ENCODE measurements at regions of chr10 and their contacts with region 1.

Region 1: GRCh38 chr10:60883187-60883586 is 60.8 kb downstream of the RHOBTB1 start:
- DNase-seq: peak; percentile 19
- H3K4me3 ChIP-seq: no peak overlapping the region
- H3K27ac ChIP-seq: no peak overlapping the region
- H3K4me1 ChIP-seq: no peaks in the 10 kb centered on the region
- H3K27me3 ChIP-seq: no peaks in the 10 kb centered on the region
- CTCF ChIP-seq: peak; percentile 56 to 68

Region 2: GRCh38 chr10:60801522-60801921 is 81.7 kb before region 1 on chr10:
- CTCF ChIA-PET with region 1: no interaction called
- dilution Hi-C with region 1: no loop called
- in situ Hi-C with region 1: no loop called
- intact Hi-C with region 1: no loop called
- DNase-seq: no peak
- H3K4me3 ChIP-seq: no peak overlapping the region
- H3K27ac ChIP-seq: no peak overlapping the region
- H3K4me1 ChIP-seq: no peaks in the 10 kb centered on the region
- H3K27me3 ChIP-seq: no peaks in the 10 kb centered on the region
- CTCF ChIP-seq: no peak

Region 3: DNA sequence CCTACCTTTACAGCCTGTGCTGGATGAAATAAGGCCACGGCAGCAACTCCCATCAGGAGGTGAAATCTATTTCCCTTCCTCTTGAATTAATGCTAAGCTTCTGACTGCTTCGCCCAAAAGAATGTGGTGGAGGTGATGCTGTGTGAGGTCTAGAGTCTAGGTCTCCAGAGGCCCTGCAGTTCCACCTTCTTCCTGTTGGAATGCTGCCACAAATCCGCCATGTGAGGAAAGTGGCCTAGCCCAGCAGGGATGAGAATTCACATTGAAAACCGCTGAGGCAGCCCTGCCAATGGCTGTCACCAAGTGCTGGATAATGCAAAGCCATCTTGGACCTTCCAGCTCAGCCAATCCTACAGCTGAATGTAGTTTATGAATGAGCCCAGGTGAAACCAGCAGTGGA is 32.8 kb after region 1 on chr10:
- CTCF ChIA-PET with region 1: no interaction called
- dilution Hi-C with region 1: no loop called
- in situ Hi-C with region 1: no loop called
- intact Hi-C with region 1: no loop called
- DNase-seq: no peak
- H3K4me3 ChIP-seq: no peak overlapping the region
- H3K27ac ChIP-seq: no peak overlapping the region
- H3K4me1 ChIP-seq: peaks cover 4% of the 10 kb centered on the region
- H3K27me3 ChIP-seq: no peaks in the 10 kb centered on the region
- CTCF ChIP-seq: peak in 1 of 2 donors; percentile 25

Region 4: GRCh38 chr10:60943316-60944158 is 60.4 kb after region 1 on chr10:
- CTCF ChIA-PET with region 1: no interaction called
- dilution Hi-C with region 1: no loop called
- in situ Hi-C with region 1: no loop called
- intact Hi-C with region 1: loop called (anchors 1 kb)
- DNase-seq: peak; percentile 35
- H3K4me3 ChIP-seq: peak overlapping the region; percentile 56 to 96 (median 64)
- H3K27ac ChIP-seq: peak overlapping the region; percentile 40
- H3K4me1 ChIP-seq: peaks cover 16% of the 10 kb centered on the region
- H3K27me3 ChIP-seq: no peaks in the 10 kb centered on the region
- CTCF ChIP-seq: no peak

Region 5: GRCh38 chr10:60964257-60965235 is 81.4 kb after region 1 on chr10:
- CTCF ChIA-PET with region 1: interaction called, 8 read pairs
- dilution Hi-C with region 1: no loop called
- in situ Hi-C with region 1: loop called in 1 of 2 experiments (anchors 5 kb)
- intact Hi-C with region 1: loop called (anchors 1 kb)
- DNase-seq: peak; percentile 82
- H3K4me3 ChIP-seq: peak overlapping the region in 1 of 3 experiments; percentile 26
- H3K27ac ChIP-seq: peak overlapping the region; percentile 86
- H3K4me1 ChIP-seq: peaks cover 26% of the 10 kb centered on the region
- H3K27me3 ChIP-seq: no peaks in the 10 kb centered on the region
- CTCF ChIP-seq: peak; percentile 73 to 87

Region 6: DNA sequence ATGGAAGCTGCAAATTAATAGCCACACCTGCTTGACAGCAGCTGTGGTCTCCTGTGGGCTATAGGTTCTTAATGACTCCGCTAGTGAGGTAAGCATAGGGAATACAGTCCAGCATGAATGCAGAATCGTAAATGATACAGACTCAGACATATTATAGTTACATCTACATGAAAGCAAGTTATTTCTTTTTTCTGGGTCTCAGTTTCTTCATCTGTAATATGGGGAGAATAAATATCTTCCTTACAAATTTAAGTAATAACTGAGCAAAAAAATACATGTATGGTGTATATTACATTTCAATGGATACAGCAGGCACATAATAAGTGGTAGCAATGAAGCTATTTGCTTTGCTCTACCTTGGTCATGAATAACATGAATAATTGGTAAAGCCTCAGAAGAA is 306.7 kb after region 1 on chr10:
- CTCF ChIA-PET with region 1: no interaction called
- dilution Hi-C with region 1: no loop called
- in situ Hi-C with region 1: no loop called
- intact Hi-C with region 1: loop called (anchors 5 kb)
- DNase-seq: no peak
- H3K4me3 ChIP-seq: no peak overlapping the region
- H3K27ac ChIP-seq: no peak overlapping the region
- H3K4me1 ChIP-seq: no peaks in the 10 kb centered on the region
- H3K27me3 ChIP-seq: no peaks in the 10 kb centered on the region
- CTCF ChIP-seq: no peak

Measured in mammary epithelial cell (primary cell).